MCF 10A (cell line): ENCODE measurements at regions of chrX and their contacts with region 1.

Region 1: GRCh38 chrX:70096052-70096451 is 33.8 kb downstream of the OTUD6A start:
- DNase-seq: peak; percentile 51
- H3K4me3 Mint-ChIP-seq: no peak overlapping the region
- H3K27ac Mint-ChIP-seq: no peak overlapping the region
- H3K4me1 Mint-ChIP-seq: no peaks in the 10 kb centered on the region
- H3K27me3 Mint-ChIP-seq: peaks cover 24% of the 10 kb centered on the region
- CTCF ChIP-seq: peak; percentile 39

Region 2: DNA sequence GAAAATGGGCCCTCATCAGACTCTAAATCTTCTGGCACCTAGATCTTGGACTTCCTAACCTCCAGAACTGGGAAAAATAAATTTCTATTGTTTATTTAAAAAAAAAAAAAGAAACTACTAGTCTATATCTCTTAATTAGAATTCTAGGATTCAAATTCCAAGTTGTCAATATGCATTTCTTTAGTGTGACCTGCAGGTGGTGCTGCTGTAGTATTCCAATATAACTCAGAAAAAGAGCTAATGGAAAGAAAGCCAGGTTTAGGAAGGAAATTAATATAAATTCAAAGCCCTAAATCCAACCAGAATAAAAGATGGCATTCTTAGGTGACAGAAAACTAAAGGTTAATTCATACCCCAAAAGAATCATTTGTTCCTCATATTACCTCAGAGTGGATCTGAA is 671.9 kb before region 1 on chrX:
- CTCF ChIA-PET with region 1: interaction called, 21 read pairs
- POLR2A ChIA-PET with region 1: no interaction called
- intact Hi-C with region 1: loop called (anchors 5 kb)
- DNase-seq: peak; percentile 27
- H3K4me3 Mint-ChIP-seq: no peak overlapping the region
- H3K27ac Mint-ChIP-seq: no peak overlapping the region
- H3K4me1 Mint-ChIP-seq: no peaks in the 10 kb centered on the region
- H3K27me3 Mint-ChIP-seq: peaks cover 62% of the 10 kb centered on the region
- CTCF ChIP-seq: peak; percentile 36

Region 3: DNA sequence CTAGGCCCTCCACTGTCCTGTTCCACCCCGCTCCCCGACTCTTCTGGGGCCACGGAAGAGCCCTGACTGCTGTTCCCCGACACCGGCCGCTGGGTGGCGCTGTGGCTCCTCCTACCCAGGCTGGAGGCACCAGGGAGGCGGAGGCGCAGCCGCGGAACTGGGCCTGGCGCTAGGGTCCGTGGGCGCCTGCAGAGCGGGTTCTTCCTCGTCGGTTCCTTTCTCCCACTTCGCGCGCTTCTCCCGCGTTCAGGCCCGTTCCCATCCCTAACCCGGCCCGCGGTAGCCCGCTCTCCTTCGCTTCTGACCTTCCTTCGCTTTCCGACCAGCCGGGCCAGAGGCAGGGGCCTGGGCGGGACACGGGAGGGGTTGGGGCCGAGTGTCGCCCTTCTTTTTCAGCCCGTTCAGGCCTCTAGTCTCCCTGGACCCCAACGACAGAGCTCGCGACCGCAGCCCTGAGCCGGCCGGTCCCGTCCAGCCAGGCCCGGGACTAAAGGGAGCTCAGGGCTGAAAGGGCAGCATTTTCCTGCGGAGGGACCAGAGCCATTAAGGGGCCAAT is 557.7 kb before region 1 on chrX:
- CTCF ChIA-PET with region 1: interaction called, 92 read pairs
- POLR2A ChIA-PET with region 1: no interaction called
- intact Hi-C with region 1: loop called (anchors 5 kb)
- DNase-seq: peak; percentile 63
- H3K4me3 Mint-ChIP-seq: peak overlapping the region; percentile 56
- H3K27ac Mint-ChIP-seq: peak overlapping the region; percentile 36
- H3K4me1 Mint-ChIP-seq: no peaks in the 10 kb centered on the region
- H3K27me3 Mint-ChIP-seq: peaks cover 31% of the 10 kb centered on the region
- CTCF ChIP-seq: peak; percentile 79

Region 4: DNA sequence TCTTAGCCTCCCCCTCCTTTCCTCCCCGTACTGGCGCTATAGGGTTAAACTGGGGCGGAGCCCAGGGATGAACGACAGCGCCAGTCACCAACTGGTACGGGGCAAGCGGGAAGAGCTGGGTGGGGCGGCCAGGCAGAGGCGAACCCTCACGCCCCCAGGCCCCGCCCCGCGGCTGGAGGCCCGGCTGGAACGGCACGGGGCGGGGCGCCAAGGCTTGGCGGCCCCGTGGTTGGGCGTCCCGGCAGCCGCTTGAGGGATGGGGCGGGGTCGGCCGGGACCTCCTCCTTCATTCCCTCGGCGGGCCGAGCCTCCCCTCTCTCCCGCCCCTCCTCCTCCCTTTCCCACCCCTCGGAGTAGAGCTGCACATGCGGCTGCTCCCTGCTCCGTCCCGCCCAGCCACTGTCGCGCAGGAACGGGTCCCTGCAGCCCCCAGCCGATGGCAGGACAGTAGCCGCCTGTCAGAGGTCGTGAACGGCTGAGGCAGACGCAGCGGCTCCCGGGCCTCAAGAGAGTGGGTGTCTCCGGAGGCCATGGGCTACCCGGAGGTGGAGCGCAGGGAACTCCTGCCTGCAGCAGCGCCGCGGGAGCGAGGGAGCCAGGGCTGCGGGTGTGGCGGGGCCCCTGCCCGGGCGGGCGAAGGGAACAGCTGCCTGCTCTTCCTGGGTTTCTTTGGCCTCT is 480.1 kb before region 1 on chrX and contains the start of gene EDA:
- CTCF ChIA-PET with region 1: interaction called, 30 read pairs
- POLR2A ChIA-PET with region 1: no interaction called
- intact Hi-C with region 1: loop called (anchors 5 kb)
- DNase-seq: peak; percentile 86
- H3K4me3 Mint-ChIP-seq: peak within 1 kb of the TSS; percentile 78
- H3K27ac Mint-ChIP-seq: no peak within 1 kb of the TSS
- H3K4me1 Mint-ChIP-seq: peaks cover 5% of the 10 kb centered on the region
- H3K27me3 Mint-ChIP-seq: peaks cover 60% of the 10 kb centered on the region
- CTCF ChIP-seq: no peak
- total RNA-seq, gene EDA: 1.1 and 1.3 TPM in 2 replicates

Region 5: DNA sequence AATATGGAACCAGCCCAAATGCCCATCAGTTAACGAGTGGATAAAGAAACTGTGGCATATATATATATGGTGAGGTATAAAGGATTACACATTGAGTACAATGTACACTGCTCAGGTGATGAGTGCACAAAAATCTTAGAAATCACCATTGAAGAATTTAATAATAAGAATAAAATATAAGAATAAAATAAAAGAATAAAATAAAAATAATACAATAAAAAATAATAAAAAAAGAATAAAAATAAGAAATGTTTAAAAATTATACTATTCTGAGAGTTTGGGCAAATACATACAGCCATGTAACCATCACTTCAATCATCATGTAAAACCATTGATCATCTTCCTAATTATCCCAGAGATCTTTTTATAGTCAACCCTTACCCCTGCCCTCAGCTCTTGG is 219.8 kb before region 1 on chrX:
- CTCF ChIA-PET with region 1: no interaction called
- POLR2A ChIA-PET with region 1: no interaction called
- intact Hi-C with region 1: no loop called
- DNase-seq: no peak
- H3K4me3 Mint-ChIP-seq: no peak overlapping the region
- H3K27ac Mint-ChIP-seq: no peak overlapping the region
- H3K4me1 Mint-ChIP-seq: no peaks in the 10 kb centered on the region
- H3K27me3 Mint-ChIP-seq: peaks cover 8% of the 10 kb centered on the region
- CTCF ChIP-seq: no peak

Region 6: GRCh38 chrX:70030301-70030767 is 65.7 kb before region 1 on chrX:
- CTCF ChIA-PET with region 1: interaction called, 197 read pairs
- POLR2A ChIA-PET with region 1: no interaction called
- intact Hi-C with region 1: loop called (anchors 5 kb)
- DNase-seq: peak; percentile 78
- H3K4me3 Mint-ChIP-seq: no peak overlapping the region
- H3K27ac Mint-ChIP-seq: no peak overlapping the region
- H3K4me1 Mint-ChIP-seq: peaks cover 5% of the 10 kb centered on the region
- H3K27me3 Mint-ChIP-seq: peaks cover 47% of the 10 kb centered on the region
- CTCF ChIP-seq: peak; percentile 77

Region 7: DNA sequence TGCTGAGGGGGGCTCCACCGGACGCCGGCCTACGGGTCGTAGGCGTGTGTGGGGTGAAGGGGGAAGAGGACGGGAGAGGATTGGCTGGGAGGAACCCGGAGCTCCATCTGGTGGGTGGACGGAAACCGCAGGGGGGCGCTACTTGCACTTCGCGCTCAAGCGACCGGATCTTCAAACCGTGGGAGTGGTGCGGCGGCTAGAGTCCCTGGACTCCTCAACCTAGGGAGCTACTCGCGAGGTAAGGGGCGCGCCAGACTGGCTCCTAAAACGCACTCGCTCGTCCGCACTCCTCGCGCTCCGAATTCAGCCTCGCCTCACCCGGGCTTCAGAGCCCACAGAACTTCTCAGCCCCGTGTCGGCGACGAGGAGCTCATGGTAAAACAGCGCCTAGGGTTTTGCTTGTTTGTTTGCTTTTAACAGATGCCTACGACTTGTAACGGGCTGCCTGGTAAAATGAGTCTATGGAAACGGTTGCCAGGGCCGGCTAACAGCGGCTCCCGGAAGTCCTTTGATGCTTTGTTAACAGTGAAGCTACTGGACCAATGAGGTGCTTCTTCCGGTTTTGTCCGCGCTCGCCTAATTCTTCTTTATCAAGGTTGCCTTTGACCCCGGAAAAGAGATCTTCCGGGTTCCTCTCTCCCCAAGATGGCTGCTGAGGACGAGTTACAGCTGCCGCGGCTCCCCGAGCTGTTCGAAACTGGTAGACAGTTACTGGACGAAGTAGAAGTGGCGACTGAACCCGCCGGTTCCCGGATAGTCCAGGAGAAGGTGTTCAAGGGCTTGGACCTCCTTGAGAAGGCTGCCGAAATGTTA is 37.5 kb after region 1 on chrX and contains the start of gene IGBP1:
- CTCF ChIA-PET with region 1: interaction called, 10 read pairs
- POLR2A ChIA-PET with region 1: no interaction called
- intact Hi-C with region 1: no loop called
- DNase-seq: peak; percentile 83
- H3K4me3 Mint-ChIP-seq: peak within 1 kb of the TSS; percentile 96
- H3K27ac Mint-ChIP-seq: peak within 1 kb of the TSS; percentile 96
- H3K4me1 Mint-ChIP-seq: peaks cover 7% of the 10 kb centered on the region
- H3K27me3 Mint-ChIP-seq: peaks cover 25% of the 10 kb centered on the region
- CTCF ChIP-seq: peak; percentile 51
- total RNA-seq, gene IGBP1: 31.9 and 36.3 TPM in 2 replicates